Activated B cell treated with CpG ODN at 0.5 μM for 24 hours (primary cell): ENCODE measurements at regions of chr2 and their contacts with region 1.

Region 1: GRCh38 chr2:232327105-232328041 is 51.2 kb upstream of the ALPP start:
- DNase-seq: peak; percentile 67
- ATAC-seq: peak; percentile 80
- H3K4me3 Mint-ChIP-seq: no peak overlapping the region
- H3K27ac Mint-ChIP-seq: no peak overlapping the region
- H3K4me1 Mint-ChIP-seq: peaks cover 8% of the 10 kb centered on the region
- H3K27me3 Mint-ChIP-seq: no peaks in the 10 kb centered on the region
- CTCF ChIP-seq: no peak

Region 2: GRCh38 chr2:231900972-231901371 is 426.4 kb before region 1 on chr2:
- CTCF ChIA-PET with region 1: interaction called, 3 read pairs
- POLR2A ChIA-PET with region 1: no interaction called
- intact Hi-C with region 1: loop called (anchors 1 kb)
- DNase-seq: no peak
- ATAC-seq: no peak
- H3K4me3 Mint-ChIP-seq: no peak overlapping the region
- H3K27ac Mint-ChIP-seq: no peak overlapping the region
- H3K4me1 Mint-ChIP-seq: no peaks in the 10 kb centered on the region
- H3K27me3 Mint-ChIP-seq: no peaks in the 10 kb centered on the region
- CTCF ChIP-seq: no peak

Region 3: GRCh38 chr2:231925303-231926179 is 401.8 kb before region 1 on chr2:
- CTCF ChIA-PET with region 1: interaction called, 18 read pairs
- POLR2A ChIA-PET with region 1: no interaction called
- intact Hi-C with region 1: loop called (anchors 1 kb)
- DNase-seq: peak; percentile 71
- ATAC-seq: peak; percentile 70
- H3K4me3 Mint-ChIP-seq: peak overlapping the region; percentile 65
- H3K27ac Mint-ChIP-seq: no peak overlapping the region
- H3K4me1 Mint-ChIP-seq: peaks cover 13% of the 10 kb centered on the region
- H3K27me3 Mint-ChIP-seq: peaks cover 47% of the 10 kb centered on the region
- CTCF ChIP-seq: no peak

Region 4: DNA sequence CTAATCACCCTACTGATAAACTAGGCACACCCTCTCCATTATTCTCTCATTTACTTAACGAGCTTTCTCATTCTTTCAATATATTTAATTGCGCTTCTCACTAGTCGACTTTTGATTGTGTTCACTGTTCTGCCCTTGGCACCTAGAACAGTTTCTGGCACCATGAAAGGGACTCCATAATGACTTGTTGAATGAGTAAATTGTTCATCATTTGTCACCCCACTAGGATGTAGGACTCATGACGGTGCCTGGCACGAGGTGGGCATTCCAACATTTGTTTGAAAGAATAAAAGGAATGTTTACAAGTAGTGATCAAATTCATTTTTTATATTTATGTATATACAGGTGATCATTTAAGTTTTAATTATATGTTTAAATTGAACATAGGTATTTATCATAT is 242.2 kb before region 1 on chr2:
- CTCF ChIA-PET with region 1: no interaction called
- POLR2A ChIA-PET with region 1: no interaction called
- intact Hi-C with region 1: no loop called
- DNase-seq: no peak
- ATAC-seq: no peak
- H3K4me3 Mint-ChIP-seq: no peak overlapping the region
- H3K27ac Mint-ChIP-seq: no peak overlapping the region
- H3K4me1 Mint-ChIP-seq: peaks cover 2% of the 10 kb centered on the region
- H3K27me3 Mint-ChIP-seq: no peaks in the 10 kb centered on the region
- CTCF ChIP-seq: no peak

Region 5: GRCh38 chr2:232142049-232142448 is 185.3 kb before region 1 on chr2:
- CTCF ChIA-PET with region 1: interaction called, 4 read pairs
- POLR2A ChIA-PET with region 1: no interaction called
- intact Hi-C with region 1: loop called (anchors 10 kb)
- DNase-seq: no peak
- ATAC-seq: no peak
- H3K4me3 Mint-ChIP-seq: no peak overlapping the region
- H3K27ac Mint-ChIP-seq: no peak overlapping the region
- H3K4me1 Mint-ChIP-seq: peaks cover 21% of the 10 kb centered on the region
- H3K27me3 Mint-ChIP-seq: no peaks in the 10 kb centered on the region
- CTCF ChIP-seq: no peak

Region 6: DNA sequence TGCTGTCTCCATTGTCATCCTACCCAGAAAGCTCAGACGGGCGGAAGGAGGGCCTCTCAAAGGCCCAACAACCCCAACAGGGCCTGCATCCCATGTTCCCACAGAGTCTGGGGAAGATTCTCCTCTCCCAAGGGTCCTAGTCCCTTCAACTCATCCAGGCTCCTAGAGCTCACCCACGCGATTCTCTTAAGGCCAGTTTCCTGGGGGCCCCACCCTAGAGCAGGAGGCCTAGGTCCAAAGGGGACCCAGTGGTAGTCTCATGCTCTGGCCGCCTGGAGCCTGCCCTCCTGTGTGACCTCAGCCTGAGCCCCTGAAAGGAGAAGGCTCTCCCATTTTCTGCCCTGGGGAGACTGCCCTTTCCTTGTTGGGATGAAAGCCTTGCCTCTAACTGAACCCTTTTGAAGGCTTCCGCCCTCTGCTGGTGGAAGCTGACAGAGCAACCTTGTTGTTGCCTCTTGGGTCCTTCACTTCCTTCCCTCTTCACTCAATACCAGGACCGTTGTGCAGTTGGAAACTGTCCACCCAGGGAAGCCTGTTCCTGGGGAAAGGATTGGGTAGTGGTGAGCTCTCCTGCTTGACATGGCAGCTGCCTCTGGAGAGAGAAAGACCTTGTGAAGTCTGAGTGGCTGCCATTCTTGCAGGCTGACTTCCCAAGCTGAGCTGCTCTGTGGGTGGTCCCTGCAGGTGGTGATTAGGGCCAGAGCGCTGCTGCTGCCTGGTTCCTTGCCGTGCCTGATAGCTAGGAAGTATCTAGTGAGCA is 34.8 kb before region 1 on chr2:
- CTCF ChIA-PET with region 1: interaction called, 3 read pairs
- POLR2A ChIA-PET with region 1: no interaction called
- intact Hi-C with region 1: loop called (anchors 1 kb)
- DNase-seq: peak; percentile 23
- ATAC-seq: peak; percentile 50
- H3K4me3 Mint-ChIP-seq: no peak overlapping the region
- H3K27ac Mint-ChIP-seq: no peak overlapping the region
- H3K4me1 Mint-ChIP-seq: peaks cover 2% of the 10 kb centered on the region
- H3K27me3 Mint-ChIP-seq: no peaks in the 10 kb centered on the region
- CTCF ChIP-seq: no peak